Esophagus muscularis mucosa (tissue), 4 donors: ENCODE measurements at regions of chr3 and their contacts with region 1.

Region 1: DNA sequence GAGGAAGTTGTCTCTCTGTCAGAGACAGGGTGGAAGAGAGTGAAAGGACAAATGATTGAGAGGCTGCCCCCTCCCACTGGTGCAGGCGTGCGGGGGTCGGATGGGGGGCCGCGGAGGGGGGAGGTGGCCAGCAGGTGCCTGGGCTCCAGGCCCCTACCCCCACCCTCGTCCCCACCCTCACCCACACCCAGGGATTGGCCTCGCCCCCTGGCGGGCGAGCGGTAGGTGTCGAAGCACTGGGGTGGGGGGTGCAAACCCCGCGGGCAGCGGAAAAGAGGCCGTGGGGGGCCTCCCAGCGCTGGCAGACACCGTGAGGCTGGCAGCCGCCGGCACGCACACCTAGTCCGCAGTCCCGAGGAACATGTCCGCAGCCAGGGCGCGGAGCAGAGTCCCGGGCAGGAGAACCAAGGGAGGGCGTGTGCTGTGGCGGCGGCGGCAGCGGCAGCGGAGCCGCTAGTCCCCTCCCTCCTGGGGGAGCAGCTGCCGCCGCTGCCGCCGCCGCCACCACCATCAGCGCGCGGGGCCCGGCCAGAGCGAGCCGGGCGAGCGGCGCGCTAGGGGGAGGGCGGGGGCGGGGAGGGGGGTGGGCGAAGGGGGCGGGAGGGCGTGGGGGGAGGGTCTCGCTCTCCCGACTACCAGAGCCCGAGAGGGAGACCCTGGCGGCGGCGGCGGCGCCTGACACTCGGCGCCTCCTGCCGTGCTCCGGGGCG is at the start of gene KAT2B:
- DNase-seq: peak; percentile 93
- H3K4me3 ChIP-seq: peak within 1 kb of the TSS; percentile 58 to 94 (median 80)
- H3K27ac ChIP-seq: peak within 1 kb of the TSS; percentile 85 to 99 (median 97)
- H3K4me1 ChIP-seq: peaks cover 41 to 52% (median 50%) of the 10 kb centered on the region in 4 donors
- H3K27me3 ChIP-seq: no peaks in the 10 kb centered on the region
- CTCF ChIP-seq: peak; percentile 42 to 73 (median 71)
- EP300 ChIP-seq: no peak
- POLR2A ChIP-seq: peak; percentile 19
- total RNA-seq, gene KAT2B: 37.8 to 58.5 (median 49.5) TPM

Region 2: GRCh38 chr3:19920401-19921075 is 119.4 kb before region 1 on chr3:
- intact Hi-C with region 1: no loop called
- DNase-seq: no peak
- H3K4me3 ChIP-seq: no peak overlapping the region
- H3K27ac ChIP-seq: no peak overlapping the region
- H3K4me1 ChIP-seq: no peaks in the 10 kb centered on the region
- H3K27me3 ChIP-seq: no peaks in the 10 kb centered on the region
- CTCF ChIP-seq: no peak
- EP300 ChIP-seq: no peak
- POLR2A ChIP-seq: no peak

Region 3: GRCh38 chr3:19946832-19947548 is 92.9 kb before region 1 on chr3 and contains the start of gene RAB5A:
- intact Hi-C with region 1: loop called (anchors 2 kb)
- DNase-seq: peak; percentile 99
- H3K4me3 ChIP-seq: peak within 1 kb of the TSS; percentile 80 to 97 (median 95)
- H3K27ac ChIP-seq: peak within 1 kb of the TSS; percentile 93 to 99 (median 98)
- H3K4me1 ChIP-seq: peaks cover 23 to 46% (median 44%) of the 10 kb centered on the region in 4 donors
- H3K27me3 ChIP-seq: no peaks in the 10 kb centered on the region
- CTCF ChIP-seq: no peak
- EP300 ChIP-seq: peak; percentile 88
- POLR2A ChIP-seq: no peak
- total RNA-seq, gene RAB5A: 74.8 to 92.1 (median 76.4) TPM

Region 4: GRCh38 chr3:20096135-20096685 is 56.3 kb after region 1 on chr3:
- intact Hi-C with region 1: loop called (anchors 5 kb)
- DNase-seq: no peak
- H3K4me3 ChIP-seq: no peak overlapping the region
- H3K27ac ChIP-seq: peak overlapping the region in 3 of 4 donors; percentile 14 to 61 (median 49)
- H3K4me1 ChIP-seq: peaks cover 0 to 36% (median 30%) of the 10 kb centered on the region in 4 donors
- H3K27me3 ChIP-seq: no peaks in the 10 kb centered on the region
- CTCF ChIP-seq: no peak
- EP300 ChIP-seq: no peak
- POLR2A ChIP-seq: no peak

Region 5: DNA sequence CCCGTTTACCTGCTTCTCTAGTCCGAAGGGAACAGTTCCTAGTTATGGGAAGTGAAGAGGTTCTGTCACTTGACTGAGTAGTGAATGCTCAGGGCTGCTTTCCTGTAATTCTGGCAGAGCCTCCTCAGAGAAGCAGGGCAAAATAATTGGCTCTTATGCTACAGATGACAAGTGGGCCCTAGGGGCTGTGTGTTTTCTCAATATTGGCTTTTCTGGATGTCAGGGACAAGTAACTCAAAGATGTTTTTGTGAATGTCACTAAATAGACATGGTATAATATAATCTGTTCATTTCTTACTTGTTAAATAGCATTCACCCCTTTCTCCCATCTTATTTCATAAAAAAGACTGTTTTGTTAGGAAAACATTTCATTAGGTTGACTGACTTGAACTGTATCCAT is 106.0 kb after region 1 on chr3:
- intact Hi-C with region 1: loop called (anchors 5 kb)
- DNase-seq: no peak
- H3K4me3 ChIP-seq: no peak overlapping the region
- H3K27ac ChIP-seq: no peak overlapping the region
- H3K4me1 ChIP-seq: peaks cover 5 to 29% (median 19%) of the 10 kb centered on the region in 4 donors
- H3K27me3 ChIP-seq: no peaks in the 10 kb centered on the region
- CTCF ChIP-seq: no peak
- EP300 ChIP-seq: no peak
- POLR2A ChIP-seq: no peak

Region 6: GRCh38 chr3:20185701-20186598 is 146.0 kb after region 1 on chr3 and contains the start of gene SGO1:
- intact Hi-C with region 1: loop called (anchors 5 kb)
- DNase-seq: peak; percentile 100
- H3K4me3 ChIP-seq: peak within 1 kb of the TSS; percentile 70 to 78 (median 72)
- H3K27ac ChIP-seq: peak within 1 kb of the TSS; percentile 88 to 94 (median 89)
- H3K4me1 ChIP-seq: peaks cover 16 to 22% (median 19%) of the 10 kb centered on the region in 4 donors
- H3K27me3 ChIP-seq: no peaks in the 10 kb centered on the region
- CTCF ChIP-seq: peak in 1 of 3 experiments; percentile 35
- EP300 ChIP-seq: no peak
- POLR2A ChIP-seq: peak; percentile 68
- total RNA-seq, gene SGO1: 0.34 TPM in 1 of 4 donors, not detected in the others